ENCODE measurements at regions of chr1 and their contacts with region 1.

Region 1: GRCh38 chr1:178310685-178311105 is 186.1 kb downstream of the CLEC20A start:
- DNase-seq: no peak
- H3K4me3 Mint-ChIP-seq: no peak overlapping the region
- H3K27ac Mint-ChIP-seq: no peak overlapping the region
- H3K4me1 Mint-ChIP-seq: no peaks in the 10 kb centered on the region
- H3K27me3 Mint-ChIP-seq: peaks cover 1% of the 10 kb centered on the region

Region 2: DNA sequence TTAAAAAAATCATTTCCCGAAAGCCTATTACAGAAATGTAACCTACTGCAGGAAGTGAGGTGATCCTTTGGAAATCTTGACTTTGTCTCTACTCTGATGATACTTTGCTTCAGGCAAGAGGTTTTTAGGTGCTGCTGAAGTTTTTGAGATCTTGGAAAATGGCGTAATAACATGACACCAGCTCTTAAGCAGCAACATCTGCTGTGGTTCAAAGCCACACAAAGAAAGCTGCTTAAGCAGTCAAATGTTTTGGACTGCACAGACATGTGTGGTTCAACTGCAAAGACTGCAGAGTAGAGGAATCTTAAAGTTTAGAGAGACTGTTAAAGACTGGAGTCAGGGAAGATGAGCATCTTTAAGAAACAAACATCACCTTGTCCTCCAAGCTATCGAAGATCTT is 77.7 kb before region 1 on chr1:
- CTCF ChIA-PET with region 1: no interaction called
- POLR2A ChIA-PET with region 1: no interaction called
- intact Hi-C with region 1: no loop called
- DNase-seq: no peak
- H3K4me3 Mint-ChIP-seq: no peak overlapping the region
- H3K27ac Mint-ChIP-seq: no peak overlapping the region
- H3K4me1 Mint-ChIP-seq: no peaks in the 10 kb centered on the region
- H3K27me3 Mint-ChIP-seq: no peaks in the 10 kb centered on the region

Region 3: DNA sequence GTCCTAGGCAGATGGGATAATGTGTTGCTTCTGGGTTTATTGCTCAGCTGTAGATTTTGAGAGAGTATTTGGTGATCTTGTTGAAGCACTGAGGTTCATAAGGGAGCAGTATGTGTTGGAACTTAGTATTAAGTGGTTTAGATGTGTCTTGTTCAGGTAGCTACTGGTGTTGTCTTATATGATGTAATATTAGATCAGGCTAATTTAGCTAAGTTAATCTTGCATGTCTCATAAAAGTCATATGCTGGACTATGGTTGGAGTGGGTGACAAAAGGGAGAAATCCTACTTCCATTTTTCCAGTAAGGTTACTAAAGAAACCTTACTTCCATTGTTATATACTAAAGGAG is 10.4 kb before region 1 on chr1:
- CTCF ChIA-PET with region 1: interaction called, 24 read pairs
- POLR2A ChIA-PET with region 1: no interaction called
- intact Hi-C with region 1: no loop called
- DNase-seq: no peak
- H3K4me3 Mint-ChIP-seq: no peak overlapping the region
- H3K27ac Mint-ChIP-seq: no peak overlapping the region
- H3K4me1 Mint-ChIP-seq: no peaks in the 10 kb centered on the region
- H3K27me3 Mint-ChIP-seq: peaks cover 2% of the 10 kb centered on the region

Region 4: GRCh38 chr1:178501705-178502329 is 191.1 kb after region 1 on chr1:
- CTCF ChIA-PET with region 1: interaction called, 48 read pairs
- POLR2A ChIA-PET with region 1: no interaction called
- intact Hi-C with region 1: loop called (anchors 2 kb)
- DNase-seq: peak; percentile 72
- H3K4me3 Mint-ChIP-seq: no peak overlapping the region
- H3K27ac Mint-ChIP-seq: no peak overlapping the region
- H3K4me1 Mint-ChIP-seq: no peaks in the 10 kb centered on the region
- H3K27me3 Mint-ChIP-seq: peaks cover 6% of the 10 kb centered on the region

Region 5: DNA sequence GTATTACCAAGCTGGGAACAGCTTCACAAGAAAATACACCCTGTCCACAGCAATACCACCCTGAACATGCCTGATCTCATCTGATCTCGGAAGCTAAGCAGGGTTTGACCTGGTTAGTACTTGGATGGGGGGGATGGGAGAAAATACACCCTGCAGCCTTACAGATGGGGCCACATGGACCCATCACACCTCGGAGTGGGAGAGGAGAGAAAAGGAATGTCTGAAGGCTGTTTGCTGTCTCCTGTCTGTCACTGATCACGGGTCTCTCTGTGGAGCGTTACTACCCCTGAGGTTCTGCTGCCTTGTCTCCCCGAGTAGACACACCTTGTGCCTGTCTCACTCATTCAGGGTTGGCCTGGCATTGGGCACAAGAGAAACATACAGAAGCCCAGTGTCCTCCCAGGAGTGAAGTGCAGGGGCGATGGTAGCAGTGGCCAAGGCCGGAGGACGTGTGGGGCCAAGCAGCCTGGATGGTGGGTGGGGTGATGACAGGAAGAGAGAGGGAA is 250.2 kb after region 1 on chr1:
- CTCF ChIA-PET with region 1: no interaction called
- POLR2A ChIA-PET with region 1: no interaction called
- intact Hi-C with region 1: no loop called
- DNase-seq: no peak
- H3K4me3 Mint-ChIP-seq: no peak overlapping the region
- H3K27ac Mint-ChIP-seq: no peak overlapping the region
- H3K4me1 Mint-ChIP-seq: no peaks in the 10 kb centered on the region
- H3K27me3 Mint-ChIP-seq: peaks cover 2% of the 10 kb centered on the region

Region 6: DNA sequence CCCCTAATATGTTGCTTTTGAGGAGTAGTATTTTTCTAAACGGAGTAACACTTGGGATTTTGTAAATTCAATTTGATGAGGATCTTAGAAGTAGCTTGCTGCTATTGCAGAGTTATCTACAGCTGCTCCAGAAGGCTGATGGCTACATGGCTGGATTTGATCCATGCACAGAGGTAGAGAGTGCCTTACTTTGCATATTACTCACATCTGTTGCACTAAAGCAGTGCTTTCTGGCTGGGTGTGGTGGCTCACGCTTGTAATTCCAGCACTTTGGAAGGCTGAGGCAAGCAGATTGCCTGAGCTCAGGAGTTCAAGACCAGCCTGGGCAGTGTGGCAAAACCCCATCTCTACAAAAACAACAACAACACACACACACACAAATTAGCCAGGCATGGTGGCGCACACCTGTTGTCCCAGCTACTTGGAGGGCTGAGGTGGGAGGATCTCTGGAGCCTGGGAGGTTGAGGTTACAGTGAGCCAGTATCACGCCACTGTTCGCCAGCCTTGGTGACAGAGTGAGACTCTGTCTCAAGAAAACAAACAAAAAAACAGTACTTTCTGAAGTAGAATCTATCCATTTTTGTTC is 439.0 kb after region 1 on chr1:
- CTCF ChIA-PET with region 1: no interaction called
- POLR2A ChIA-PET with region 1: no interaction called
- intact Hi-C with region 1: loop called (anchors 5 kb)
- DNase-seq: no peak
- H3K4me3 Mint-ChIP-seq: no peak overlapping the region
- H3K27ac Mint-ChIP-seq: no peak overlapping the region
- H3K4me1 Mint-ChIP-seq: no peaks in the 10 kb centered on the region
- H3K27me3 Mint-ChIP-seq: no peaks in the 10 kb centered on the region